PC-3 (cell line): ENCODE measurements at regions of chr7 and their contacts with region 1.

Region 1: DNA sequence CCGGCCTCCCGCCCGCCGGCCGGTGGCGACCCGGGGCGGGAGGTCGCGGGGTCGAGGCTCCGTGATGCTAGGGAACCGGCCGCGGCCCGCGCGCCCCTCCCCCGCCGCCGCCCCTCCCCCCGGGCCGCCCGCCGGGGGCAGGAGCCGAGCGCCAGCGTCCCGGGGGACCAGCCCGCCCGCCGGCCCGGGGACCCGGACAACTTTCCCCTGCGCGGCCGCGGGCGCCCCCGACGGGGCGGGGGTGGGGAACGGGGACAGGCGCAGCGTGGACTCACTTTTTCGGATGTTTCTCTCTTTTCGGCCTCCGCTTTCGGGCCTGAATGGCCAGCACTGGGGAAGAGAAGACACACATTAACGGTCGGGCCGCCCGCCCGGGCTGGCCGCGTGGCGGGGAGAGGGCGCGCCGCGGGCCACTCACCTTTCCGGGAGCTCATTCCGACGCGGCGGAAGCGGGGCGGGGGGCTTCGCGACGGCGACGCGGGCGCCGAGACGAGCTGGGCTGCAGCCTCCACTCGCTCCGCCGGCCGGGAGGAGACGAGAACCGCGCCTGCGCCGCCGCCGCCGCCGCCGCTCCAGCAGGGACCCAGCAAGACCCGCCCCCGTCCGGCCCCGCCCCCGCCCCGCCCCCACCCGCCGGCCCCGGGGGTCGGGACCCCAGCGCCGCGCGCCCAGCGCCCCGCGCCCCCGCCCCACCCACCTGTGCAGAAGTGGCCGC is at the start of gene SRPK2:
- DNase-seq: peak; percentile 59
- ATAC-seq: peak; percentile 80
- H3K4me3 ChIP-seq: peak within 1 kb of the TSS; percentile 94
- H3K27ac ChIP-seq: no peak within 1 kb of the TSS
- H3K4me1 ChIP-seq: peaks cover 8% of the 10 kb centered on the region; the same call in 1 of the 2 replicates
- H3K27me3 ChIP-seq: no peaks in the 10 kb centered on the region
- CTCF ChIP-seq: no peak
- total RNA-seq, gene SRPK2: 21.6 and 32.1 TPM in 2 replicates

Region 2: DNA sequence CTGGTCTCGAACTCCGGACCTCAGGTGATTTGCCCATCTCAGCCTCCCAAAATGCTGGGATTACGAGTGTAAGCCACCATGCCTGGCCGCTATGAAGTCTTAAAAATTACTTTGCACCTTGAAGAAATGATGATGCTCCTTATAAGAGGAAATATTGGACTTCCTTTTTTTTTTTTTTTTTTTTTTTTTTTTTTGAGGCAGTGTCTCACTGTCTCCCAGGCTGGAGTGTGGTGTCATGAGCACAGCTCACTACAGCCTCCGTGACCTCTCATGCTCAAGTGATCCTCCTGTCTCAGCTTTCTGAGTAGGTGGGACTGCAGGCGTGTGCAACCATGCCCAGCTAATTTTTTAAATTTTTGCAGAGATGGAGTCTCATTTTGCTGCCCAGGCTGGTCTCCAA is 309.2 kb before region 1 on chr7:
- CTCF ChIA-PET with region 1: no interaction called
- POLR2A ChIA-PET with region 1: interaction called, 14 read pairs
- intact Hi-C with region 1: no loop called
- DNase-seq: no peak
- ATAC-seq: no peak
- H3K4me3 ChIP-seq: no peak overlapping the region
- H3K27ac ChIP-seq: no peak overlapping the region
- H3K4me1 ChIP-seq: no peaks in the 10 kb centered on the region
- H3K27me3 ChIP-seq: no peaks in the 10 kb centered on the region
- CTCF ChIP-seq: no peak